Posterior cingulate gyrus (tissue), 11 donors: ENCODE measurements at regions of chr4 and their contacts with region 1.

Region 1: GRCh38 chr4:39044364-39044955 is 12.3 kb upstream of the TMEM156 start:
- DNase-seq: peak; percentile 73 to 96 (median 82)

Region 2: DNA sequence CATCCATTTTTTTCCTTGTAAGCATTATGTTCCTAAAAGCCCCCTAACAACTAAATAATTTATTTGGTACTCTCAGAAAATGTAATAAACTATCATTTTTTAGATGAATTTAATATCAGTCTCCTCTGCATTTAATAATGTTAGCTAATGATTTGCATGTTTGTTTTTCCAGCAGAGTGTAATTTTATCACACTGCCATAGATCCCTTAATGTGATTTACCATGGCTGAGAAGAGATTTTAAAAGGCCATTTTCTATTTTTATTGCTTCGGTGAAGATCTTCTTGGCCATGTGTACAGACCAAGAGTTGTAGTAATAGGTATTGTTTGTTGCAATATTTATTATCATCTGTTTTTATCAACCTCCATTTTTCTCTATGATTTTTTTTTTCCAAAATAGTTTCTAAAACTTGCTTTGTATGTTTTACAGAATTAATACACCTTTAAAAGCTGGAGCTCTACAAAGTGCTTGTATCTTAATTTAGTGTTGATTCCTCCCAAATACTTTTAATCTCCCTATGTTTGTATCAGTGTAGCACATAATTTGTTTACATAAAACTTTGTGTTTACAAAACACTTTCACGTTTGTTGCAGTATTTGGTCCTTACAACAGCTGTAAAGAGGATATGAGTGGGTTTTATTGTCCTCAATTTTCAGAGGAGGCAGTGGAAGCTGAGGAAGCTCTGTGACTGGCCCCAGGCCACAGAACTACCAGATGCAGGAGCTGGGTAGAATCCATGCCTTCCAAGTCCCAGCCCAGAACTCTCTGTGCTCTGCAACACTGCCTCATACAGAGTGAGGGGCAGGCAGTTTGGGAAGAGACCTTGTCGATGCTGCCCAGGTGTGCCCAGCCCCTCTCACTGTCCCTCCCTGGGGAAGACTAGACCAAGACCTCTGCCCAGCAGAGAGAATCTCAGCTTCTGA is 118.7 kb before region 1 on chr4:
- intact Hi-C with region 1: loop called (anchors 10 kb)
- DNase-seq: peak in 8 of 10 donors; percentile 16 to 94 (median 56)

Region 3: GRCh38 chr4:39124885-39125599 is 80.6 kb after region 1 on chr4:
- intact Hi-C with region 1: no loop called
- DNase-seq: no peak